ENCODE measurements at regions of chr6 and their contacts with region 1.

Region 1: GRCh38 chr6:157314705-157315321 is 8.5 kb downstream of the TMEM242 start:
- DNase-seq: no peak
- ATAC-seq: peak; percentile 51 to 58
- H3K4me3 ChIP-seq: no peak overlapping the region
- H3K27ac ChIP-seq: no peak overlapping the region
- H3K4me1 ChIP-seq: peaks cover 2% of the 10 kb centered on the region
- H3K27me3 ChIP-seq: no peaks in the 10 kb centered on the region

Region 2: GRCh38 chr6:157443066-157443800 is 128.4 kb after region 1 on chr6:
- intact Hi-C with region 1: no loop called
- DNase-seq: no peak
- ATAC-seq: no peak
- H3K4me3 ChIP-seq: no peak overlapping the region
- H3K27ac ChIP-seq: no peak overlapping the region
- H3K4me1 ChIP-seq: peaks cover 2% of the 10 kb centered on the region
- H3K27me3 ChIP-seq: no peaks in the 10 kb centered on the region

Region 3: GRCh38 chr6:157592525-157592924 is 277.7 kb after region 1 on chr6:
- intact Hi-C with region 1: loop called in 3 of 4 experiments (anchors 2 to 5 kb)
- DNase-seq: no peak
- ATAC-seq: no peak
- H3K4me3 ChIP-seq: no peak overlapping the region
- H3K27ac ChIP-seq: no peak overlapping the region
- H3K4me1 ChIP-seq: no peaks in the 10 kb centered on the region
- H3K27me3 ChIP-seq: no peaks in the 10 kb centered on the region

Region 4: GRCh38 chr6:157597446-157598312 is 282.9 kb after region 1 on chr6:
- intact Hi-C with region 1: loop called in 3 of 4 experiments (anchors 2 to 5 kb)
- DNase-seq: peak; percentile 53 to 82 (median 75)
- ATAC-seq: peak; percentile 71 to 77
- H3K4me3 ChIP-seq: no peak overlapping the region
- H3K27ac ChIP-seq: no peak overlapping the region
- H3K4me1 ChIP-seq: peaks cover 1% of the 10 kb centered on the region
- H3K27me3 ChIP-seq: no peaks in the 10 kb centered on the region

Region 5: DNA sequence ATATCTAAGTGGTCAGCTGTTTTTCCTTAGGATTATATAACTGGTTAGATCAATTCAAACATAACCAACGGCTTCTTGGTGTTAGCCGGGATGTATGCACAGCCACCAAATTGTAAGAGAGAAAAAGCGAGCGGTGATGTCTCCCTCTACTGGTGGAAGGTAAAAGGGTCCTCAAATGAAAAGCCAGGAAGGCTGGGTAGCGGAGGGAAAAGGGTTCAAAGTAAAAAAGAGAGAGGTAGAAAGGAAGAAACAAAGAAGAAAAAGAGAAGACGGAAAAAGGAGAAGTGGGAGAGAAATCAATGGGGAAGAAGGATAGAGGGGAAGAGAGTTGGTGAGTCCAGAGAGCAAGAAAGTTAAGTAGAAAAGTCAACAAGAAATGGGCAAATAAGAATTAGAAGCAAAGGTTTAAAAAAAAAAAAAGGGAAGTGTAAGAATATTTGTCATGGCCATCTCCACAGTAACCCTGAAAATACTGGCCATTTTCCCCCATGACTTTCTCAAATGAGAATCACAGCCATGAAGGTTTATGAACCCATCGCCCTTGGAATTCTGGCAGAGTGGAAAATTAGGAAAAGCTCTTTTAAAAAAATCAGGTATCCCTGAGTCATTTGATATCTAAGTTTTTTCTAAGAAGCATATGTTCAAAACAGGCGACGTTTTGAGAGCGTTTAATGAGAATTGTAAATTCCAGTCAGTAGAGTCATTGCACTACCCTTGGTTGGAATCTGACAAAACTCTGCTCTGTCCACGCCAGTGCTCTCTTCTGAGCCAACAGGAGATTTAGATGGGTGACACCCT is 352.6 kb after region 1 on chr6:
- intact Hi-C with region 1: loop called (anchors 5 to 10 kb)
- DNase-seq: no peak
- ATAC-seq: no peak
- H3K4me3 ChIP-seq: no peak overlapping the region
- H3K27ac ChIP-seq: no peak overlapping the region
- H3K4me1 ChIP-seq: peaks cover 6% of the 10 kb centered on the region
- H3K27me3 ChIP-seq: no peaks in the 10 kb centered on the region

Measured in right cardiac atrium (tissue), 5 donors.